Psoas muscle (tissue), 8 donors: ENCODE measurements at regions of chrX and their contacts with region 1.

Region 1: DNA sequence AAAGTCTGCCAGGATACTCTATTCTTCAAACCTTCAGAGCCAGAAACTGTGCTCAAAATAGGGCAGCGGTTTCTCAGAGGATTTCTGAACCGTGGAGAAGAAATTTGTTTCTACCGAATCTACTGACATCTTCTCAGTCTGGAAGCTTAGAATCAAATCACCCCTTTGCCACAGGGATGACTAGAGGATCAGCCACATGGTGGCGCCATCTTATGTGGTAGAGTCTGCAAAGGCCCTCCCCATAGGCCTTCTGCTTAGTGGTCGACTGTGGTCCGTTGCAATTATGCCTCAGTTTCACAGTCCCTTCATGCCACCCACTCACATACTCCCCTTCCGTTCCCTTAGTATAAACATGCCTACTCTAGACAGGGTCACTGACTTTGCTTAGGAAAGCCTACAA is 680.7 kb upstream of the SPANXN1 start:
- DNase-seq: no peak
- ATAC-seq: no peak
- H3K4me3 ChIP-seq: no peak overlapping the region
- H3K27ac ChIP-seq: no peak overlapping the region
- H3K4me1 ChIP-seq: no peaks in the 10 kb centered on the region
- H3K27me3 ChIP-seq: no peaks in the 10 kb centered on the region
- CTCF ChIP-seq: no peak

Region 2: DNA sequence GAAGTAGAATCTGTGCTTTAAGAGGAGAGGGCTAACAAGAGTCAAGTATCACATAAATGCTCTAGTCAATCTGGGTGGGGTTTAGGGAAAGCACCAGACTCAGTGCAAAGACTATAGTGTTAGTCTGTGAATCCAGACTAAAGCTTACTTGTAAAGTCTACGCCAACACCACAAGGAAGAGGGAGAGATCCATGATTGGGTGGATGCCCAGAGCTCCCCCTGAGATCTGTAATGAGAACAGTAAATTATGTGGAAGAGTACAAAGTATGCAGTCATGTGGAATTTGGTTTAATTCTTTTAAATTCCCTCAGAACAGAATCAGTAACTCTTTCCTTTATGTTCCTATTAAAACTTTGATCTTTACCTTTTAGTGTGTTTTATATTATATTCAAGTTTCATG is 1895.6 kb before region 1 on chrX:
- intact Hi-C with region 1: loop called in 1 of 2 experiments (anchors 5 kb)
- DNase-seq: no peak
- ATAC-seq: no peak
- H3K4me3 ChIP-seq: no peak overlapping the region
- H3K27ac ChIP-seq: no peak overlapping the region
- H3K4me1 ChIP-seq: no peaks in the 10 kb centered on the region
- H3K27me3 ChIP-seq: no peaks in the 10 kb centered on the region
- CTCF ChIP-seq: no peak

Region 3: GRCh38 chrX:144531877-144532276 is 34.7 kb before region 1 on chrX:
- intact Hi-C with region 1: no loop called
- DNase-seq: no peak
- ATAC-seq: no peak
- H3K4me3 ChIP-seq: no peak overlapping the region
- H3K27ac ChIP-seq: no peak overlapping the region
- H3K4me1 ChIP-seq: no peaks in the 10 kb centered on the region
- H3K27me3 ChIP-seq: no peaks in the 10 kb centered on the region
- CTCF ChIP-seq: no peak